ENCODE measurements at regions of chr5 and their contacts with region 1.

Region 1: DNA sequence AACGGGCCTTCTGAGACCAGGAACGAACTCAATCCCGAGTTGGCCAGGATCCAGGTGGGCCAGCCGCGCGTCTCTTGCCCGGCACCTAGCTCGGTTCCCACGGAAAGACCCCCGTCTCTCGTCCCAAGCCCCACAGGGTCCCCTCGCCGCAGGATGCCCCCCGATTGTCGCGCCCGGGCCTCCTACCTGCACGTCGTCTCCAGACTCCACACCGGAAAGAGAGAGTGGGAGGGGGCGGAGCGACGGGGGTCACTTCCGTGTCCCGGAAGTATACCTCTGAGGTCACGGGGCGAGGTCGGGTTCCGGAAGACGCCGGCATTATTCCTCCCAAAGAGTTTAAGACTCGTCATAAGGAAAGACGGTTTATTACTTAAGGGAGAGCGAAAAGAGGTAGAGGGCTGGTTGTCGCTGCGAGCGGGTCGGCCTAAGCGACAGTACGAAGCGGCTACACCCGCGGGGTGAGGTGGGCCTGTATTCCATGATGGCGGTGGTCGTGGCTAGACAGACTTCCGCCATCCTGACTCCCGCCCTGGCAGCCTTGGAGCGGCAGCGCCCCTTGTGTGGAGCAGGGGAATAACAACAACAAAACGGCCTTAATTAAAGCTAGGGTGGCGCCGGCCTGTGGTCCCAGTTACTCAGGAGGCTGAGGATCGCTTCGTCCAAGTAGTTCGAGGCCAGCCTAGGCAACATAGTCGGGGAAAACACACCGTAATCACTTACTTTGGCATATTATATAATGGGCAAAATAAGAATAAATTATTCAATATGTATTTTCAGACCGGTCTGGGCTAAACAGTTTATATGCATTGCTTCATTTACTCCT is at the start of gene RPS14:
- DNase-seq: peak; percentile 87 to 99 (median 94)
- ATAC-seq: peak; percentile 91
- H3K4me3 Mint-ChIP-seq: peak within 1 kb of the TSS; percentile 88 to 100 (median 97)
- H3K27ac Mint-ChIP-seq: peak within 1 kb of the TSS; percentile 98 to 100 (median 100)
- H3K4me1 Mint-ChIP-seq: peaks cover 16 to 46% (median 33%) of the 10 kb centered on the region in 4 donors
- H3K27me3 Mint-ChIP-seq: no peaks in the 10 kb centered on the region
- polyA plus RNA-seq, gene RPS14: 9,910 to 11,694 (median 11,598) TPM

Region 2: DNA sequence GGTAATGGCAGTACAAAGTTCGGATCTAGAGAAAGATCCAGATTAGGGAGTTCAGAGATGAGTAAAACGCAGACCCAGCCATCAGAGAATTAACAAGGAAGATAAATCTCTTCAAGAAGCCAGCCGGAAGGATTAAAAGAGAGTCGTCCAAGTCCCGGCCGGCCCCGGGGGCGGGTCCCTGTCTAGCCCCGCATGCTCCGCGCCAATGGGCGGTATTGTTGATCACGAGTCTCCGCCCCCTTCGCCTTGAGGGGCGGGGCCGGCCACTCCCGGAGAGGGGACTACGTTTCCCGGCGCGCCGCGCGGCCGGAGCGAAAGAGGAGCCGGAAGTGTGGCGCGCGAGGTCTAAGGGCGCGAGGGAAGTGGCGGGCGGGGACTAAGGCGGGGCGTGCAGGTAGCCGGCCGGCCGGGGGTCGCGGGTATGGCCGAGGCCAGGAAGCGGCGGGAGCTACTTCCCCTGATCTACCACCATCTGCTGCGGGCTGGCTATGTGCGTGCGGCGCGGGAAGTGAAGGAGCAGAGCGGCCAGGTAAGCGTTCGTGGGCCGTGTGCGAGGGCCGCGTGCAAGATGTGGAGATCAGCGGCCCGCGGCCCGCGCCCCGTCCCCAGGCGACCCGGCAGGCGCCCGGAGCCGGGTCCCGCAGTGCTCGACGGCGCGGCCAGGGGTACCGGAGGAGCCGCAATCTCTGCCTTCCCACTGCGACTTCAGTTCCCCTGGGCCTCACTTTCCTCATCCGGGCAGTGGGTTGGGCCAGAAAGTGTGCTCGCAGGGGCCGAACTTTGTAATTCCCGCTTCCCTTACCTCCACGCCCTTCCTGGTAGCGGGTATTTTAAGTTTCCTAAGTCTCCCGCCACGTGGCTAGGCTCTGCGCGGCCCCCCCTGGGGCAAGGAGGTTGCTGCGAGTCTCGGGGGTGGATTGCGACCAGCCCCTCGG is 92.1 kb before region 1 on chr5 and contains the start of gene TCOF1:
- POLR2A ChIA-PET with region 1: interaction called, 11 read pairs
- DNase-seq: peak; percentile 94 to 98 (median 97)
- ATAC-seq: peak; percentile 97 to 98
- H3K4me3 Mint-ChIP-seq: peak within 1 kb of the TSS; percentile 82 to 93 (median 88)
- H3K27ac Mint-ChIP-seq: peak within 1 kb of the TSS; percentile 51 to 98 (median 91)
- H3K4me1 Mint-ChIP-seq: peaks cover 27 to 54% (median 51%) of the 10 kb centered on the region in 4 donors
- H3K27me3 Mint-ChIP-seq: peaks cover 0 to 2% (median 0%) of the 10 kb centered on the region in 5 donors
- polyA plus RNA-seq, gene TCOF1: 1.8 to 24.7 (median 3.3) TPM

Region 3: DNA sequence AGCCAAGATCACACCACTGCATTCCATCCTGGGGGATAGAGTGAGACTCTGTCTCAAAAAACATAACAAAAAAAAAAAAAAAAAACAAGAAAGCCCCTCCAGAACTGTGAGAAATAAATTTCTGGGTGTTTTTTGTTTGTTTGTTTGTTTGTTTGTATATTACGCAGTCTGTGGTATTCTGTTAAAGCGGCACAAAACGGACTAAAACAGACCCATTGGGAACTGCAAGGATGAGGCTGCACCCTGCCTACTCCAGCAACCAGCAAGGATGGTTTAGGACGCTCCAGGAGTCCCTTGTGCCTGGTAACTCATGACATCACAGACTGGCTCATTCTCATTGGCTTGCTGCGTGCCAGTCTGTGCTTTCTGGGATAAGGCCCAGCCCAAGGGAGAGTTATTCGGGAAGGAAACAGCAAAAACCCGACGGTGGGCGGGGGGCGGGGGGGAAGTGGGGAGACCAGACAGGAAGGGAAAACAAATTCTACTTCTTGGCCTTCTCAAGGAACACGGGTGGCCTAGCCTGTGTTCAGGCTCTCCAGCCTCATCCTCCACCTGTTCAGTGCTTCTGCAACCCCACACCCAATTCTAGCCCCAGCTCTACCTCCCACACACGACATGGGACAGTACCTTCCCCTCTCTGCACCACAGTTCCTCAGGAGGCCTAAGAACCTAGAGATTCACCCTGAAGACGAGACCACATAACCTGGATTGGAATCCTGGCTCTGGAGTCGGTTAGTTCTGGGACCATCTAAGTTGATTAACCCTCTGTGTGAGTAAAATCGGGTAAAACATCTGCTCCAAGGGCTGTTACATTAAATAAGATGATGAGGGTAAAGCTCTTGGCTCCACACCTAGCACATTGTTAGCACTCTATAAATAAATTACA is 39.8 kb before region 1 on chr5:
- POLR2A ChIA-PET with region 1: interaction called, 56 read pairs
- DNase-seq: peak in 7 of 10 donors; percentile 28 to 70 (median 44)
- ATAC-seq: no peak
- H3K4me3 Mint-ChIP-seq: peak overlapping the region; percentile 96 to 100 (median 99)
- H3K27ac Mint-ChIP-seq: peak overlapping the region; percentile 81 to 100 (median 100)
- H3K4me1 Mint-ChIP-seq: peaks cover 19 to 71% (median 43%) of the 10 kb centered on the region in 4 donors
- H3K27me3 Mint-ChIP-seq: no peaks in the 10 kb centered on the region

Region 4: DNA sequence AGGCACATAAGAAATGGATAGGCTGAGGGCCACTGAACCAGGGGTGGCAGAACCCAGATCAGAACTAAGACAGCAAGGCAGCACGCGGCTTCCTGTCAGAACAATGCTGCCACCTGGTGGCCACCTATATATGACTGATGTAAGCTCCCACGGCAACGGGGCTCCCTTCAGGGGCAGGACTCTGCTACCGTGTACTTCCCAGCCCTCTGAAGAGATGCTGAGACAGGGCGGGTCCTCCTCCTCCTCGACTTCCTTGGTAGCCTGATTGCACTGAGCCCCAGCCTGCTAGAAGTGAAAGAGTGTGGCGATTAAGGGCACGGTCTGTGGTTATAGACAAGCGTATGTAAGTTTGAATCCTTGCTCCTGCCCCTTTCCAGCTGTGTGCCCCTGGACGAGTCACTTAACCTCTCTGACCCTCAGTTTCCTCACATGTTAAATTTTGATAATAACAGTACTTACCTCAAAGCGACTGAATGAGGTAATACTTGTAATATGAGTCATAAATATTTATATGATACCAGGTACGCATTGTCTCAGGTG is 13.5 kb before region 1 on chr5:
- POLR2A ChIA-PET with region 1: interaction called, 11 read pairs
- DNase-seq: peak; percentile 79 to 94 (median 88)
- ATAC-seq: peak; percentile 98 to 99
- H3K4me3 Mint-ChIP-seq: peak overlapping the region in 5 of 10 donors; percentile 12 to 59 (median 50)
- H3K27ac Mint-ChIP-seq: peak overlapping the region; percentile 30 to 93 (median 78)
- H3K4me1 Mint-ChIP-seq: peaks cover 7 to 23% (median 9%) of the 10 kb centered on the region in 4 donors
- H3K27me3 Mint-ChIP-seq: no peaks in the 10 kb centered on the region

Measured in naive thymus-derived CD8-positive, alpha-beta T cell (primary cell).